PC-3 (cell line): ENCODE measurements at regions of chr3 and their contacts with region 1.

Region 1: DNA sequence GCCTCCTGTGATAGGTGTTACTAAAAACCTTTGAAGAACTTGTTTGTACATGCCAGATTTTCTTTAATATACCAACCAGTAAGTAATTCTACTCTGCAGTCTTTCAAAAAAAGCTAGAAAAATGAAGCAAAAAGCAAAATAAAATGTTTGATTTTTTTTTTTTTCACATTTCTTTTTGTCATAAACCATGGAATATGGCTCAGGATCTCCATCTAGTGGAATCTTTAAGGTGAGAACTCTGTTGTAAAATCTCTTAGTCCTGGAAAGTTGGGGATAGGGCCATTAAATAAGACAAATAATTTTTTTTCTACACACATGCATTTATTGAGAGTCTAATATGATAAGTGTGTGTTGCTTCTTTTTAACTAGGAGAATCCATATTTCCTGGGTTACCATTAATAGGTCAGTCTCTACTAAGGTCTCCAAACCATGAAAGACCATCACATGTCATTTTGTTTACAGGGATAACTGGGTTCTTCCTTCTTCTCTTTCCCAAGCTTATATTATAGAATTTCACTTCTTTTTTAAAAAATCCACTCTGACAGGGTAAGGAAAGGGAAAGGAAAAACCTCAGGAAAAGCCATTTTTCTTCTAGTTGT is 84.6 kb downstream of the SLC9A9 start:
- DNase-seq: peak; percentile 14
- ATAC-seq: no peak
- H3K4me3 ChIP-seq: no peak overlapping the region
- H3K27ac ChIP-seq: no peak overlapping the region
- H3K4me1 ChIP-seq: no peaks in the 10 kb centered on the region
- H3K27me3 ChIP-seq: no peaks in the 10 kb centered on the region
- CTCF ChIP-seq: peak; percentile 63

Region 2: DNA sequence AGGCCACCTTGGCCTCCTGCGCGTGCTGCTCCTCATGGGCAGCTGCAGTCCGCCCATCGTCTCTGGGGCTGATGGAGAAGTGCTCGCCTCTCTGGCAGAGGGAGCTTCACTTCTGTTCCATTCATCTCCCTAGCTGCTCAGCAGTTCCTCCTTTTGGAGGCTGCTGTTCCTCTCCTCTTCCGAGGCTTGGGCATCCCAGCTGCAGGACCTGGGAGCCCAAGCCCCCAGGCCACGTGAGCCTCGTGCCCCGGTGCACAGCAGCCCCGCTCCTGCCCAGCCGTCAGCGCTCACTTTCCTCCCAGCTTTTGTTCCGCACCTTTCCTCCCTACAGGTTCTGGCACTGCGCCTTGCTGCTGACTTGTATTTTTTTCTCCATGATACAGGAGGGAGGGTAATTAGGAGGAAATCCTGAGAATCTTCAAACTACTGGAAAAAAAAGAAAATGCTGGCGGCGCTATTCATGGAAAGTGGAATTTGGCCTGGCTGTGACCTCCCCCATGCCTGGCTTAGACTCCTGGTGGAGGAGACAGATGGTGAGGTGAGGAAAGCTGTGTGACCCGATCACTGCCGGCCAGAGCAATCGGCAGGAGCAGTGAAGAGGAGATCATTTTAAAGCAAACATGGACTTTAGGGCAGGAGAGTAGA is 434.0 kb before region 1 on chr3:
- CTCF ChIA-PET with region 1: no interaction called
- POLR2A ChIA-PET with region 1: no interaction called
- intact Hi-C with region 1: loop called (anchors 10 kb)
- DNase-seq: no peak
- ATAC-seq: no peak
- H3K4me3 ChIP-seq: no peak overlapping the region
- H3K27ac ChIP-seq: no peak overlapping the region
- H3K4me1 ChIP-seq: peaks cover 33% of the 10 kb centered on the region
- H3K27me3 ChIP-seq: no peaks in the 10 kb centered on the region
- CTCF ChIP-seq: no peak

Region 3: DNA sequence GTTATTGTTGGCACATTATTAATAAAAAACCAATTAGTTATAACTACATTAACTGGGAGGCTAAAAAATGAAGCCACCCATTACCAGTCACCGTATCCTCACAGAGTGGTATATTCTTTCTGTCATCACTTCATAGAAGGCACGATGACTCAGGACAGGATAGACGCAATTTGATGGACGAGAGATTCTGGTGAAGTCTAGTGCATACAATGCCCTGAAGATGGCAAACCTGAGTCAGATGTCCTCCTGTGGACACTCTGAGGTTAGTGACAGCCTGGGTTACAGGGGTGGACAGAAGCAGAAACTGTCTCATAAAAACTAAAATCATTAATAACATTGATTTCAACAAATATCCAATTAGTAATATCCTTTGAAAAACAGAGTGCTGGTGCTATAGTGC is 65.7 kb before region 1 on chr3:
- CTCF ChIA-PET with region 1: no interaction called
- POLR2A ChIA-PET with region 1: no interaction called
- intact Hi-C with region 1: loop called (anchors 1 kb)
- DNase-seq: peak; percentile 49
- ATAC-seq: peak; percentile 91
- H3K4me3 ChIP-seq: no peak overlapping the region
- H3K27ac ChIP-seq: no peak overlapping the region
- H3K4me1 ChIP-seq: no peaks in the 10 kb centered on the region
- H3K27me3 ChIP-seq: no peaks in the 10 kb centered on the region
- CTCF ChIP-seq: peak; percentile 39; the same call in 1 of the 2 replicates

Region 4: DNA sequence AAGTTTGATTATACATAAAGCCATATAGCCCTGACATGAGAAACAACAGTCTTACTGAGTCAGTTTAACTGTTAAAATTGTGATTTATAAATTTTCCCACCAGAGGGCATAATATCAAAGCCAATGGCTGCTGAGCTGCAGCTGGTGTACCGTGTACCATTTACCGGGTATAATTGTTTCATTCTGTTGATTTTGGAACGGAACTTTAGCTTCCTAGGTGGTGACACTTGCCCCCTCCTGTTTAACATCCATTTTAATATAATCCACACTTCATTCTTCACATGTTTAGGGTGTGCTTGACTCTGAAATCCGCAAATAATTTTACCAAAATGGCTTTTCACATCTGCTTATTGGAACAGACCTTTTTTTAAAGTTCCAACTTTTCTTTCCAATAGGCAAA is 11.8 kb after region 1 on chr3:
- CTCF ChIA-PET with region 1: no interaction called
- POLR2A ChIA-PET with region 1: no interaction called
- intact Hi-C with region 1: no loop called
- DNase-seq: peak; percentile 61
- ATAC-seq: peak; percentile 77
- H3K4me3 ChIP-seq: no peak overlapping the region
- H3K27ac ChIP-seq: no peak overlapping the region
- H3K4me1 ChIP-seq: no peaks in the 10 kb centered on the region
- H3K27me3 ChIP-seq: no peaks in the 10 kb centered on the region
- CTCF ChIP-seq: peak; percentile 66